Caco-2 (cell line): ENCODE measurements at regions of chr17 and their contacts with region 1.

Region 1: DNA sequence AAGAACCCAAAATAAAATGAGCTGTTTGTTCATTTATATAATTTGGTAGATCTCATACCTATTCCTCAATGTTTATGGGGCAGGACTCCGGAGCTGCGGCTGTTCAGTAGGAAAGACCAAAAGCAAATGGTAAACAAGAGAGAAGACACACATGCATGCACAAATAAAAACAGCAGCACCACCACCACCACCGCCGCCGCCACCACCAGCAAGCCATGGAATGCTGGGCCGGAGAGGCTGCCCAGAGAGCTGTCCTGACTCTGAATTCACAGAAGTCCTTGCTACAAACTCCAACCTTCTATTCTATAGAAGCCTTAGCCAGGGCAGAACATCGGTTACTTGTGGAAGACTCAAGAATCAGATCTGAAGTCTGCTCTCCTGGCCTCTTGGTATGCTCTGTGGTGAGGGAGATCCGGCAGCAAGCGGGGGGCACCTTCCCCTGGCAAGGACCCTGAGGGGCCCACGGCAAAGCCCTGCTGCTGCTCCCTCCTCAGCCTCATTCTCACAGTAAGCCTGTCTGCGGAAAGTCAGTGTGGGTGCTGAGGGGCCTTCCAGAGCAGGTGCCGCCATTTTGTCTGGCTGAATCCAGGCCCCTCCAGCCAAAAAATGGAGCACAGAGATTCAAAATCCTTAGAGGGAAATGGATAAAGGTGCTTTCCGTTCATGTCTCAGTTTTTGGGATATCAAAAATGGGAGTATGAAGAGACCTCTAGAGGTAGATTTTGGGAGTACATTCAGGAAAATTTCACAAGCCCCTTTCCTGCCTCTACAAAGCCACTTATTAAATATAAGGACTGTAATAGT is 6.4 kb upstream of the FOXJ1 start:
- DNase-seq: peak in 1 of 2 experiments; percentile 57
- H3K4me3 ChIP-seq: no peak overlapping the region
- H3K4me3 Mint-ChIP-seq: no peak overlapping the region
- H3K27ac Mint-ChIP-seq: no peak overlapping the region
- H3K4me1 ChIP-seq: peaks cover 7% of the 10 kb centered on the region
- H3K4me1 Mint-ChIP-seq: peaks cover 12% of the 10 kb centered on the region
- H3K27me3 ChIP-seq: no peaks in the 10 kb centered on the region
- H3K27me3 Mint-ChIP-seq: no peaks in the 10 kb centered on the region
- CTCF ChIP-seq: peak; percentile 63

Region 2: GRCh38 chr17:76072148-76072858 is 75.1 kb before region 1 on chr17 and contains the start of gene SRP68:
- CTCF ChIA-PET with region 1: no interaction called
- POLR2A ChIA-PET with region 1: no interaction called
- intact Hi-C with region 1: loop called (anchors 2 kb)
- DNase-seq: peak; percentile 96 to 97
- H3K4me3 ChIP-seq: peak within 1 kb of the TSS; percentile 83
- H3K4me3 Mint-ChIP-seq: peak within 1 kb of the TSS; percentile 97
- H3K27ac Mint-ChIP-seq: peak within 1 kb of the TSS; percentile 91
- H3K4me1 ChIP-seq: 0 out of 2 replicates have a peak, but pooled peaks cover 5% of the 10 kb centered on the region
- H3K4me1 Mint-ChIP-seq: peaks cover 9% of the 10 kb centered on the region
- H3K27me3 ChIP-seq: no peaks in the 10 kb centered on the region; the same call in none of the 2 replicates
- H3K27me3 Mint-ChIP-seq: peaks cover 12% of the 10 kb centered on the region
- CTCF ChIP-seq: no peak
- total RNA-seq, gene SRP68: 105 and 113 TPM in 2 replicates

Region 3: DNA sequence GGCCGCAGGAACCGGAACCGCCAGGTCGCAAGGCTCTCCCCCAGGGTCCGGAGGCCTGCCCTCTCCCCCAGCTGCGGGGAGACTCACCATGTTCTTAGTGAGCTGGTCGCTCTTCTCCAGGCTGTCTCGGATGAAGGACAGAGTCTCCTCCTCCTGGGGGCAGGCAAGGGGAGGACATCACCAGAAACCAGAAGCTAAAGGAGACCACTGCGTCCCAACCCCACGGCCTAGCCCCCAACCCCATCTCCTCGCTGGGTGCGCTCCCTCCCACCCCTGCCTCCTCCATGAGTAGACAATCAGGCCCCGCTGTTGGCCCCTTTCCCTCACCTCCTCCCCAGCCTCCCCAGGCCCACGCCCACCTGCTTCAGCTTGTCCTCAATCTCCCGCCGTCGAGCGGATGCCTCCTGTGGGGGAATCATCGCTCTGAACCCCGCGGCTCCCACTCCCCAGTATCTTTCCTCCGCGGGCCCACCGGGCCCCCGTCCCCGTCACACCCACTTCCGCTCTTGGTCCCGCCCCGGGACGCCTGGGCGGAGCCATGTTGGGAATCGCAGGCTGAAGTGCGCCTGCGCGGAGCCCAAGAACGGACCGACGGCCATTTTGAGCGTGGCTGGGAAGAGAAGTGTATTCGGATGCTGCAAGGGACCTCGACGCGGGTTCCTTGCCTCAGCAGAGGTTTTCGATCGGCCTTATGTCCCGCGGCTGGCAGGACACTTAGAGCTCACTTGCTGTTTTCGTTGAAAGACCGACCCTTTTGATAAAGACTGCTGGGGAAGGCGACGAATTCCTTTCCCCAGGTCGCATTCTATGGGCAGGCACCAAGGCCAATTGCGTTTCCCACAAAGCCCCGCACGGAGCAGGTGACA is 43.9 kb before region 1 on chr17 and contains the start of gene EXOC7:
- CTCF ChIA-PET with region 1: interaction called, 15 read pairs
- POLR2A ChIA-PET with region 1: no interaction called
- intact Hi-C with region 1: loop called (anchors 2 kb)
- DNase-seq: peak; percentile 92 to 96
- H3K4me3 ChIP-seq: peak within 1 kb of the TSS; percentile 82
- H3K4me3 Mint-ChIP-seq: peak within 1 kb of the TSS; percentile 92
- H3K27ac Mint-ChIP-seq: peak within 1 kb of the TSS; percentile 91
- H3K4me1 ChIP-seq: peaks cover 28% of the 10 kb centered on the region
- H3K4me1 Mint-ChIP-seq: peaks cover 9% of the 10 kb centered on the region
- H3K27me3 ChIP-seq: no peaks in the 10 kb centered on the region
- H3K27me3 Mint-ChIP-seq: no peaks in the 10 kb centered on the region
- CTCF ChIP-seq: no peak
- total RNA-seq, gene EXOC7: 205 TPM in 2 replicates

Region 4: DNA sequence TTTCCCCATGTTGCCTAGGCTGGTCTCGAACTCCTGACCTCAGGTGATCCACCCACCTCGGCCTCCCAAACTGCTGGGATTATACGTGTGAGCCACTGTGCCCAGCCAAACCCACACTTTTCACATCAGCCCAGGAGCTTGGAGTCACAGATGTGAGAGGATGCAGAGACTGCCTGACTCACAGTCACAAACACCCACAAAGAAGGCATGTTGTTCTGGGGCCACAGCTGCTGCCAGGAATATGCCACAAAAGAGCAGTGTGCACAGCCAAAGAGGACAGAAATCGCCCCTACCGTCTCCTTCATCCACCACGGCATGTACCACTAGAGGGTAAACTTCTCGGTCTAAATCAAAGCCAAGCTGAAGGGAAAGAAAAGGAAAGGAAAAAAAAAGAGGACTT is 18.8 kb after region 1 on chr17:
- CTCF ChIA-PET with region 1: no interaction called
- POLR2A ChIA-PET with region 1: no interaction called
- intact Hi-C with region 1: no loop called
- DNase-seq: no peak
- H3K4me3 ChIP-seq: no peak overlapping the region
- H3K4me3 Mint-ChIP-seq: no peak overlapping the region
- H3K27ac Mint-ChIP-seq: no peak overlapping the region
- H3K4me1 ChIP-seq: no peaks in the 10 kb centered on the region
- H3K4me1 Mint-ChIP-seq: no peaks in the 10 kb centered on the region
- H3K27me3 ChIP-seq: no peaks in the 10 kb centered on the region
- H3K27me3 Mint-ChIP-seq: no peaks in the 10 kb centered on the region
- CTCF ChIP-seq: no peak